ENCODE measurements at regions of chr2 and their contacts with region 1.

Region 1: DNA sequence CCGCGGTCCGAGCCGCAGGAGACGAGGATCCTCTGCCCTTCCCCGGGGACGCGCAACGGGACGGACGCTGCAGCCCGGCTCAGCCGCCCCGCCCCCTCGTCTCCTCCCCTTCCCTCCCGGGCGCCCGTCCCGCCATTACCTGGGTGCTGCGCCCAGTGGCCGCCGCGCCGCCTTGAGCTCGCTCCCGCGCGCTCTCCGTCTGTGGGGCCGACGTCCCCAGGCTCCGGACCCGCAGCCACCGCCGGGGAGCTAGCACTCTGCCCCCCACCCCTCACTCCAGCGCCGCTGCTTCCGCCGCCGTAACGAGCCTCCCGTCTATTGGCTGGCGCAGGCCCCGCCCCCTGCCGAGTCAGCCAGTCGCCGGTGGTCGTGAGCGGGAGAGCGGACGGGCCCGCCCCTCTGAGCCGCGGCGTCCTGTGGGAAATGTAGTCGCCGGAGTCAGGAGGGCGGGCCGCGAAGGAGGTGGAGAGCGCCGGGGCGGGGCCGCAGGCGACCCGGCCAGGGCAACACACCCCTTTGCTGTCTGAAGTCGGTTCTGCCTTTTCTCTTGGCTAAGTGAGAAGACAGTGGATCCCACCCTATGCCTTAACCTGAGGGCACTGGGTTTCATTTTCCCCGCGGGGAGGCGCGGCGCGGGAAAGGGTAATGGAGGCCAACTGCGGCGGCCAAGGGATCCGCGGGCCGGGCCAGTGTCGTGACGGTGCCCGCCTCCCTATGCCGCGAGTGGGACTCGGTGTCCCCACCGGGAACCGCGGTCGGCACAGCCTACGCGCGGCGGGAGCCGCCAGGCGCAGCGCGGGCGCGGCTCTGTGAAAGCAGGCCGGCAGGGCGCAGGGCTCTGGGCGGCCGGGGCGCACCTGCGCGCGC is at the start of gene SAP130:
- DNase-seq: peak; percentile 99
- H3K4me3 Mint-ChIP-seq: peak within 1 kb of the TSS; percentile 89
- H3K27ac Mint-ChIP-seq: peak within 1 kb of the TSS; percentile 92
- H3K4me1 Mint-ChIP-seq: peaks cover 17% of the 10 kb centered on the region
- H3K27me3 Mint-ChIP-seq: peaks cover 15% of the 10 kb centered on the region
- total RNA-seq, gene SAP130: 29.8 and 32.0 TPM in 2 replicates

Region 2: GRCh38 chr2:126657636-126658318 is 1370.3 kb before region 1 on chr2:
- intact Hi-C with region 1: loop called (anchors 5 kb)
- DNase-seq: peak; percentile 92
- H3K4me3 Mint-ChIP-seq: peak overlapping the region; percentile 92
- H3K27ac Mint-ChIP-seq: peak overlapping the region; percentile 98
- H3K4me1 Mint-ChIP-seq: peaks cover 55% of the 10 kb centered on the region
- H3K27me3 Mint-ChIP-seq: no peaks in the 10 kb centered on the region

Region 3: GRCh38 chr2:127701193-127701650 is 326.8 kb before region 1 on chr2 and contains the start of gene SFT2D3:
- intact Hi-C with region 1: loop called (anchors 1 kb)
- DNase-seq: peak; percentile 97
- H3K4me3 Mint-ChIP-seq: peak within 1 kb of the TSS; percentile 92
- H3K27ac Mint-ChIP-seq: peak within 1 kb of the TSS; percentile 94
- H3K4me1 Mint-ChIP-seq: peaks cover 27% of the 10 kb centered on the region
- H3K27me3 Mint-ChIP-seq: no peaks in the 10 kb centered on the region
- total RNA-seq, gene SFT2D3: 5.9 and 6.3 TPM in 2 replicates

Region 4: DNA sequence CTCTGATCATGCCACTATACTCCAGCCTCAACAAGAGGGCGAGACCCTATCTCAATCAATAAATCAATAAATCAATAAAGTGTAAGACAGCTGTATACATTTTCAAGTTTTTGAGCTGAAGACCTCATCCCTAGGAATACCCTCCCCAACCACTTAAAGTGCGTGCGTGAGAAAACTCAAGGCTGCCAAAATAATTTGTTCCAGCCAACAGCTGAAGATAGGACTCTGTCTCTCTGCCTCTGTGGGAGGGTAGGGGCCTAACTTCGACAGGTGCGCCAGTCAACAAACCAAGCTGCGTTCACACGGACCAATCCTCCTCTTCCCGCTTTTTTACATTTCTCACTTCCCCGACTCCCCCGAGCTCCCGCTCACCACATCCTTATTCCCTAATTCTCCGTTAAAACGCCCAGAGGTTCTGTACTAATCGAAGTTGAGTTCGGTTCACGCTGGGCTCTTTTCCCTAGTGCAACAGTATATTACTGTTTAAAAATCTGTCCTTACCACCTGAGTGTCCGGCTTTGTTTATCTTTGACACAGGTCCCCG is 170.7 kb before region 1 on chr2:
- intact Hi-C with region 1: loop called (anchors 1 kb)
- DNase-seq: peak; percentile 74
- H3K4me3 Mint-ChIP-seq: peak overlapping the region; percentile 93
- H3K27ac Mint-ChIP-seq: peak overlapping the region; percentile 90
- H3K4me1 Mint-ChIP-seq: peaks cover 27% of the 10 kb centered on the region
- H3K27me3 Mint-ChIP-seq: no peaks in the 10 kb centered on the region

Region 5: DNA sequence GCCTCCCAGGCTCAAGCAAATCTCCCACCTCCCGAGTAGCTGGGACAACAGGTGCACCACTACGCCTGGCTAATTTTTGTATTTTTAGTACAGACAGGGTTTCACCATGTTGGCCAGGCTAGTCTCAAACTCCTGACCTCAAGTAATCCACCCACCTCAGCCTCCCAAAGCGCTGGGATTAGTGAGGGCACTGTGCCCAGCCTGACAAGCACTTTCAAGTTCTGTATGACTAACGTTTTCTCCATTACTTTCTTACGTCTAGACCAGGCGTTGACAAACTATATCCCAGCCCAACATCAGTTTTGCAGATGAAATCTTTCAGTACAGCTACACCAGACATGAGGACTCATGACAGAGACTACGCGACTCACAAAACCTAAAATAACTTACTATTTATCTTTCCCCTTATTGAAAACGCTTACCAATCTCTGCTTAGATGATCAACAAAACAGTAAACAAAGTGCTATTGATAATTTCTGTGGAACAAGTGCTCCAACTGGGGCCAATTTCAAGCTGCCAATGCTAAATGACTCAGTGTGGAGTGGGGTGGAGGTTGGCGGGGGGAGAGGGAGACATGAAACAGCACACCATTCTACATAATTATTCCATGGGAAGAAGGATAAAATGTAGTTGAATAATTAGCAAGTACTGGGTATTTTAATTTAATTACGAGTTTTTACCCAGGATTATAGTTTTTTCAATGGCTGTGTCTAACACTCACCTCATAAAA is 59.3 kb before region 1 on chr2:
- intact Hi-C with region 1: no loop called
- DNase-seq: no peak
- H3K4me3 Mint-ChIP-seq: no peak overlapping the region
- H3K27ac Mint-ChIP-seq: no peak overlapping the region
- H3K4me1 Mint-ChIP-seq: peaks cover 2% of the 10 kb centered on the region
- H3K27me3 Mint-ChIP-seq: no peaks in the 10 kb centered on the region

Region 6: GRCh38 chr2:128090945-128091725 is 63.1 kb after region 1 on chr2 and contains the start of gene UGGT1:
- intact Hi-C with region 1: loop called (anchors 1 kb)
- DNase-seq: peak; percentile 98
- H3K4me3 Mint-ChIP-seq: peak within 1 kb of the TSS; percentile 89
- H3K27ac Mint-ChIP-seq: peak within 1 kb of the TSS; percentile 93
- H3K4me1 Mint-ChIP-seq: peaks cover 23% of the 10 kb centered on the region
- H3K27me3 Mint-ChIP-seq: no peaks in the 10 kb centered on the region
- total RNA-seq, gene UGGT1: 69.9 and 72.1 TPM in 2 replicates

Measured in activated CD4-positive, alpha-beta T cell treated with anti-CD3 and anti-CD28 coated beads, Interleukin-2, amount 10 ng/mL, durations not matched to agents 24 days and 14 days (primary cell).